ENCODE measurements at regions of chr2 and their contacts with region 1.

Region 1: DNA sequence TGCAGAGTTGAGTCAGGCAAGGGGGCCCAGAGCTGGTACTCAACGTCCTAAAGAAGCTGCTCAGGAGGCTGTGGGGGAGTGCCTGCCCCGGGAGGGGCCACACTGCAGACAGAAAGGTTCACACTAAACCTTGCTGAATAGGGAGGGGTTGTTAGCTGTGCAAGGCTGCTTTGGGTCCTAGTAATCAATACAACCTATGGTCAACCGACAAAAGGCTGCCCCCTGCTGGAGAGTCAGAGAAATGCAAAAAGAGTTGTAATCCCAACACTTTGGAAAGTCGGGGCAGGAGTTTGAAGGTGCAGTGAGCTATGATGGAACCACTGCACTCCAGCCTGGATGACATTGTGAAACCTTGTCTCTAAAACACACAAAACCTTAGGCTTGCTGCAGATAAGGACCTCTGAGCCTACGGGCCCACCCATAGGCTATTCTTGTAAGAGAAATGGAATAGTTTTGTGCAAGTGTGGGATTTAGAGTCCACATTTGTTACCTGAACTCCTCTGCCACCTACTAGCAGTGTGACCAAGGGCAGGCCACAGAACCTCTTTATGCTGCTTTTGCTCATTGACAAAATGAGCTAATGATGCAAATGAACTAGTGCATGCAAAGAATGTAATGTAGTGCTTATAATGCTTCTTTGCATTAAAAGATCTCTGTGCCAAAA is 81.5 kb downstream of the PRPF40A start:
- DNase-seq: peak; percentile 77
- H3K4me3 Mint-ChIP-seq: no peak overlapping the region
- H3K27ac Mint-ChIP-seq: no peak overlapping the region
- H3K4me1 Mint-ChIP-seq: no peaks in the 10 kb centered on the region
- H3K27me3 Mint-ChIP-seq: peaks cover 18% of the 10 kb centered on the region

Region 2: GRCh38 chr2:152036611-152037469 is 598.9 kb before region 1 on chr2:
- CTCF ChIA-PET with region 1: interaction called, 25 read pairs
- DNase-seq: peak; percentile 75
- H3K4me3 Mint-ChIP-seq: no peak overlapping the region
- H3K27ac Mint-ChIP-seq: no peak overlapping the region
- H3K4me1 Mint-ChIP-seq: no peaks in the 10 kb centered on the region
- H3K27me3 Mint-ChIP-seq: peaks cover under 1% of the 10 kb centered on the region

Region 3: GRCh38 chr2:152183401-152184073 is 452.2 kb before region 1 on chr2:
- CTCF ChIA-PET with region 1: interaction called, 11 read pairs
- DNase-seq: no peak
- H3K4me3 Mint-ChIP-seq: no peak overlapping the region
- H3K27ac Mint-ChIP-seq: no peak overlapping the region
- H3K4me1 Mint-ChIP-seq: peaks cover 18% of the 10 kb centered on the region
- H3K27me3 Mint-ChIP-seq: peaks cover 43% of the 10 kb centered on the region

Region 4: GRCh38 chr2:152477347-152478092 is 158.2 kb before region 1 on chr2:
- CTCF ChIA-PET with region 1: no interaction called
- DNase-seq: no peak
- H3K4me3 Mint-ChIP-seq: no peak overlapping the region
- H3K27ac Mint-ChIP-seq: no peak overlapping the region
- H3K4me1 Mint-ChIP-seq: no peaks in the 10 kb centered on the region
- H3K27me3 Mint-ChIP-seq: no peaks in the 10 kb centered on the region

Region 5: DNA sequence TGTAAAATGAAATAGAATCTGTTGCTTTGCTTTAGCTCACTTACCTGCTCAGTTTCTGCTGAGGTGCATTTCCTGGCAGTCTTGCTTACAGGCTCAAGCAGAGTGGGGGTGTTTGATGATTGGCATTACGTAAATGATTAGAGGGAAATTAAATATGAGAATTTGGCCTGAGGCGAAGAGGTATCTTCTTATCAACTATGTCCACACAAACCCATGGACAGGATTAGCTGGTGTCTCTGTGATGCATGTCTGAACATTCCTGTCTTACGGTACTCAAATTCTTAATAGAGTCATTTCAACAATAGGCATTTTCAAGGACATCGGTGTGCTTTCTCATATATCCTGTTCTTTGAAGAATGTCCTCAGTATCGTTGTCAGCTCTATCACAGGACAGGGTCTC is 20.6 kb before region 1 on chr2:
- CTCF ChIA-PET with region 1: interaction called, 11 read pairs
- DNase-seq: no peak
- H3K4me3 Mint-ChIP-seq: no peak overlapping the region
- H3K27ac Mint-ChIP-seq: no peak overlapping the region
- H3K4me1 Mint-ChIP-seq: peaks cover 19% of the 10 kb centered on the region
- H3K27me3 Mint-ChIP-seq: no peaks in the 10 kb centered on the region

Measured in activated naive CD4-positive, alpha-beta T cell treated with anti-CD3 and anti-CD28 coated beads, Interleukin-2, amount 10 ng/mL, durations not matched to agents 7 days and 5 days (primary cell).